Activated T-helper 1 cell treated with anti-CD3 and anti-CD28 coated beads, Interleukin-12 subunit alpha, Interleukin-12 subunit beta, Interleukin-2, Interleukin-4 antibody, amounts not matched to agents 30 ng/mL and 10 ng/mL and 1 ng/mL, durations not matched to agents 14 hours and 24 hours and 36 hours (primary cell): ENCODE measurements at regions of chr19 and their contacts with region 1.

Region 1: GRCh38 chr19:54168174-54168917 is 4.6 kb downstream of the TMC4 start:
- DNase-seq: peak; percentile 81
- H3K4me3 Mint-ChIP-seq: no peak overlapping the region
- H3K27ac Mint-ChIP-seq: no peak overlapping the region
- H3K4me1 Mint-ChIP-seq: peaks cover 15% of the 10 kb centered on the region
- H3K27me3 Mint-ChIP-seq: peaks cover 2% of the 10 kb centered on the region

Region 2: GRCh38 chr19:54147676-54148075 is 20.7 kb before region 1 on chr19:
- intact Hi-C with region 1: no loop called
- DNase-seq: no peak
- H3K4me3 Mint-ChIP-seq: no peak overlapping the region
- H3K27ac Mint-ChIP-seq: no peak overlapping the region
- H3K4me1 Mint-ChIP-seq: no peaks in the 10 kb centered on the region
- H3K27me3 Mint-ChIP-seq: no peaks in the 10 kb centered on the region

Region 3: DNA sequence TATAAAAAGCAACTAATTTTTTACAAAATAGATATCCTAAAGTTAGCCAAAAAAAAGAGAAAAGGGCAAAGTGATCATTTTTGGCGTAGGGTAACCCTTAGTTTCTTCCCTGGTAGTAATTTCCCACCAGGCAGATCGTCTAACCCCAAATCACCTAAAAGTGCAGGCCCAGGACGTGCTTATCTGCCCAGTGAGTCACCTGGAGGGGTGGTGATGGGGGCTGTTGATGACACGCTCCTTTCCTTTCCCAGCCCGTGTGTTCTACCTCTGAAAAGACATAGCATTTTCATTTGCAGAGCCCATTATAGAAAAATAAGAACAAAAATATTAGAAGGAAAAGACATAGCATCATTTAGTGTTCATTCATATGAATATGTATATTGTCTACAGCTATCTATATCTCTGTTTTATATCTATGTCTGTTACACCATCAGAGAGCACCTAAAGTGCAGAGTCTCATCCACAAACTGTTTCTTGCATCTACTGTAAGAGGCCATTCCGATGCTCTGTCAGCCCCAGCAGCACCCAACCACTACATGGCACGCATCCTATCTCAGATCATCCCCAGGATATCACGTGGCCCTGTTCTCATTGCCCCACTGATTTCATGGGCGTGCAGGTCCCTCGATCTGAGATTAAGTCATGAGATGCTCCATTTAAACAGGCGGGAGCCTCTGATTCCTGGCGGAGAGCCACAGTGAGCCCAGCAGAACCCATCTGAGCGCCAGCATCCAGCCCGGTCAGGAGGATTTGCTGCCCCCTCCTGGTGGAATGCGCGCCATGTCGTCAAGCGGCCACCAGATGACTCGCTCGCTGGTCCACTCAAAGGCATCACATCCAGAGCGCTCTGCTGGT is 63.0 kb after region 1 on chr19:
- intact Hi-C with region 1: loop called (anchors 1 kb)
- DNase-seq: peak; percentile 77
- H3K4me3 Mint-ChIP-seq: no peak overlapping the region
- H3K27ac Mint-ChIP-seq: no peak overlapping the region
- H3K4me1 Mint-ChIP-seq: peaks cover 6% of the 10 kb centered on the region
- H3K27me3 Mint-ChIP-seq: peaks cover 43% of the 10 kb centered on the region

Region 4: GRCh38 chr19:54266133-54266532 is 97.8 kb after region 1 on chr19:
- intact Hi-C with region 1: loop called (anchors 1 kb)
- DNase-seq: peak; percentile 44
- H3K4me3 Mint-ChIP-seq: no peak overlapping the region
- H3K27ac Mint-ChIP-seq: no peak overlapping the region
- H3K4me1 Mint-ChIP-seq: no peaks in the 10 kb centered on the region
- H3K27me3 Mint-ChIP-seq: peaks cover 16% of the 10 kb centered on the region